ENCODE measurements at regions of chr16 and their contacts with region 1.

Region 1: GRCh38 chr16:88856828-88857733 is at the starts of genes GALNS and TRAPPC2L:
- DNase-seq: peak; percentile 100
- total RNA-seq, gene GALNS: 18.0 TPM
- total RNA-seq, gene TRAPPC2L: 42.3 TPM

Region 2: GRCh38 chr16:88811769-88812512 is 45.1 kb before region 1 on chr16 and contains the start of gene APRT:
- intact Hi-C with region 1: loop called (anchors 2 kb)
- DNase-seq: peak; percentile 98
- total RNA-seq, gene APRT: 46.6 TPM

Region 3: GRCh38 chr16:89093602-89094251 is 236.6 kb after region 1 on chr16 and contains the start of gene ACSF3:
- intact Hi-C with region 1: loop called (anchors 10 kb)
- DNase-seq: peak; percentile 80
- total RNA-seq, gene ACSF3: 14.7 TPM